ENCODE measurements at regions of chr6 and their contacts with region 1.

Region 1: GRCh38 chr6:55276745-55277530 is 50.3 kb upstream of the GFRAL start:
- DNase-seq: peak; percentile 39
- H3K4me3 ChIP-seq: no peak overlapping the region
- H3K27ac ChIP-seq: no peak overlapping the region
- H3K4me1 ChIP-seq: no peaks in the 10 kb centered on the region
- H3K27me3 ChIP-seq: peaks cover 1% of the 10 kb centered on the region
- CTCF ChIP-seq: peak; percentile 56 to 71

Region 2: DNA sequence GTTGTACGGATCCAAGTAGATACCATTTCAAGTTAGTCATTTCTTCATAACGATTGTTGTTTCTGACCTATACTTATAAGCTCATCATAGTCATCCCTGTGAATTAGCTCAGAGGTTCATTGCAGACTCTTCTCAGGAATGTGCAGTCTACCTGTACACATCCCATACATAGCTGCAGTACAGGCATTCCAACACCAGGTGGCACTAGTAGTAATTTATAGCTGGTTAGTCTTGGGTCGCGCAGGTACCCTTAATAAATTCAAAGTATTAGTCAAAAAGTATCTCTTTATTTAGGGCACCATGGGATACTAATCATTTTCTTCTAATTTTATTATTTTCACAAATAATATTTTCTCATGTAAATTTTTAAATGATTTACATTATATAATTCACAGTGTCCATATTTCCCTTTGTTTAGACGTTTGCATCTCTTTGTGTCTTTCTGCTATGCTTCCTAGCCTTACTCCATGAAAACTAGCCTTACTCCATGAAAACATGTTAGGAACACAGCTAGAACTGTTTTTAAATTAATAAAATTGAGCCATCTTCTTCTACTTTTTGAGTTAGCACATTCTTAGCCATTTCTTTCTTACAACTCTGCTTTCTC is 559.0 kb before region 1 on chr6:
- CTCF ChIA-PET with region 1: no interaction called
- dilution Hi-C with region 1: no loop called
- in situ Hi-C with region 1: no loop called
- intact Hi-C with region 1: no loop called
- DNase-seq: peak; percentile 81
- H3K4me3 ChIP-seq: peak overlapping the region in 2 of 3 experiments; percentile 37 to 43
- H3K27ac ChIP-seq: peak overlapping the region; percentile 91
- H3K4me1 ChIP-seq: peaks cover 22% of the 10 kb centered on the region
- H3K27me3 ChIP-seq: no peaks in the 10 kb centered on the region
- CTCF ChIP-seq: peak; percentile 82 to 85

Region 3: DNA sequence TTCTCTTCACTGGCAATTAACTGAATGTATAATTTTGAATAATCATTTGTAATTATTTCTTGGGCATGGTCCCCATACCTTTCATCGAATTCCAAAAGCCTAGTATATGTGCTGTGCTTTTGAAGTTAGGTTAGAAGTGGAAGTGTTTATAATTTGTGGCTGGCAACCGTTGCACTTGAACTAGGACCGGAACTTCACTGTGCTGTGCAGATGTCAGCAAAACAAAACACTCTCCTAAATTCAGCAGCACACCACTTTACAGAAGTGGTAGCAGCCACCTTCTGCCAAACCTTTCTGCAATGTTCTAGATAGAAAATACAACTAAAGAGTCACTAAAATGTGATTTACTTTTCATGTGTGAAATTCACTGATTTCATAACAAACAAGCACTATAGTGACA is 318.5 kb before region 1 on chr6:
- CTCF ChIA-PET with region 1: no interaction called
- dilution Hi-C with region 1: no loop called
- in situ Hi-C with region 1: no loop called
- intact Hi-C with region 1: no loop called
- DNase-seq: no peak
- H3K4me3 ChIP-seq: no peak overlapping the region
- H3K27ac ChIP-seq: no peak overlapping the region
- H3K4me1 ChIP-seq: no peaks in the 10 kb centered on the region
- H3K27me3 ChIP-seq: no peaks in the 10 kb centered on the region
- CTCF ChIP-seq: no peak

Region 4: DNA sequence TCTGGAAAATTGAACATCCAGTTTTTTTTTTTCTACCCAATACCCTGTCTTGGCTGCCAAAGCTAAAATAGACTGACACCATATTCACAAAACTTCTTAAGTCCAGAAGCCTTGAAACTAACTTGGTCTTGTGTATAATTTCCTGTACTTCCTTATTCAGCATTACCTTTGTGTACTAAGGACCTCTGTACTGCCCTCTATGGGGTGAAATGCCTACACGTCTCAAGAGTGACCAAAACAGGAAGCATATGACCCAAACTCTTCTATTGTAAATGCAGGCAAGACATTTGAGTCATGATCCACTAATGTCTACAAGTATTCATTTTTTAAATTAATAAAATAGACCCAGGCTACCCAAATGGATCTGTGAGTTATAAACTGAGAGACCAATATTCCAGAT is 251.7 kb after region 1 on chr6:
- CTCF ChIA-PET with region 1: no interaction called
- dilution Hi-C with region 1: no loop called
- in situ Hi-C with region 1: no loop called
- intact Hi-C with region 1: loop called (anchors 2 kb)
- DNase-seq: peak; percentile 44
- H3K4me3 ChIP-seq: no peak overlapping the region
- H3K27ac ChIP-seq: no peak overlapping the region
- H3K4me1 ChIP-seq: no peaks in the 10 kb centered on the region
- H3K27me3 ChIP-seq: no peaks in the 10 kb centered on the region
- CTCF ChIP-seq: peak; percentile 56 to 67

Region 5: DNA sequence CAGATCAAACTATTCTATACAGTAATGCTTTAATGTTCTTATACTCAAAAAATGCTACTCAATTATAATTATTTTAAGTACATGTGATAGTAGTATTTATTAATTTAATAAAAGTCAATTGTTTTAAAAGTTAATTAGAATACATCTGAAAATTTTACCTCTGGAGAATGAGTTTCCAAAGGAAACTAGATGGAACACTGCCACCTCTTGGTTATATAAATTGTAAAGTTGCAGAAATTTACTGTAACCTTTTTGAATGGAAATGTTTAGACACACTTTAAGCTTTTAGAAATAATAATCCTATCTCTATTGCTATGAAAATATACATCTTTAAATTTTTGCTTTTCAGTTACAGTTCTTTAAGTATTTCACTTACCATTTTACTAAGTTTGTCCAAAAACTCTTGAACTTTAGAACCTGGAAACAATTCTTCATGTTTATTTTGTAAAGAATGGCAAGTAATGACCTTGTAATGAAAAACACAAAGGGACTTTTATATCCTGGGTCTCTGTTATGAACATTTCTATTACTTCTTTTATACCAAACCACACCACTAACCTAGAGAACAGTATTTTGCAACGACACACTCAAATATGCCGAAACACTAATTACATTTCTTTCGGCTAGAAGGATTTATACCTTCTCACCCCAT is 609.4 kb after region 1 on chr6:
- CTCF ChIA-PET with region 1: interaction called, 6 read pairs
- dilution Hi-C with region 1: no loop called
- in situ Hi-C with region 1: no loop called
- intact Hi-C with region 1: loop called (anchors 10 kb)
- DNase-seq: no peak
- H3K4me3 ChIP-seq: no peak overlapping the region
- H3K27ac ChIP-seq: no peak overlapping the region
- H3K4me1 ChIP-seq: peaks cover 8% of the 10 kb centered on the region
- H3K27me3 ChIP-seq: no peaks in the 10 kb centered on the region
- CTCF ChIP-seq: peak; percentile 27 to 42

Region 6: DNA sequence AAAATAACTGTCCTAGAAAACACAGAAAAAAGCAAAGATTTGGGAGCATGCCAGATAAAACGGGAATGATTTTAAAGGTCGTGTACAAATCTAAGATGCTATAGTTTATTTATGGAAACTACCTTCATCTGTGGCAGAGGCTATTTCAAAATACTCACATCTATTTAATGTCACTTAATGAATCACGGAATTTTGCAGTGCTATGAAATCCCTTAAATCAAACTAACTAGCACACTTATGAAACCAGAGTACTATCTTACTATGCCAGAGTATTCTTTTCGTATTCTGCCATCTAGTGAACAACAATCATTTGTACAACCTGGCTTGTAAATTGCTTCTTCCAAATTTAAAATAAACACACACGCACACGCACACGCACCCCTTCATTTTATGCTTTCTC is 676.4 kb after region 1 on chr6:
- CTCF ChIA-PET with region 1: interaction called, 5 read pairs
- dilution Hi-C with region 1: no loop called
- in situ Hi-C with region 1: loop called (anchors 25 kb)
- intact Hi-C with region 1: loop called (anchors 5 kb)
- DNase-seq: peak; percentile 36
- H3K4me3 ChIP-seq: peak overlapping the region in 2 of 3 experiments; percentile 1 to 2
- H3K27ac ChIP-seq: no peak overlapping the region
- H3K4me1 ChIP-seq: no peaks in the 10 kb centered on the region
- H3K27me3 ChIP-seq: no peaks in the 10 kb centered on the region
- CTCF ChIP-seq: peak; percentile 43 to 56

Region 7: GRCh38 chr6:56279346-56280080 is 1002.6 kb after region 1 on chr6:
- CTCF ChIA-PET with region 1: no interaction called
- dilution Hi-C with region 1: no loop called
- in situ Hi-C with region 1: loop called in 1 of 2 experiments (anchors 25 kb)
- intact Hi-C with region 1: loop called (anchors 10 kb)
- DNase-seq: peak; percentile 17
- H3K4me3 ChIP-seq: no peak overlapping the region
- H3K27ac ChIP-seq: no peak overlapping the region
- H3K4me1 ChIP-seq: no peaks in the 10 kb centered on the region
- H3K27me3 ChIP-seq: no peaks in the 10 kb centered on the region
- CTCF ChIP-seq: no peak

Region 8: DNA sequence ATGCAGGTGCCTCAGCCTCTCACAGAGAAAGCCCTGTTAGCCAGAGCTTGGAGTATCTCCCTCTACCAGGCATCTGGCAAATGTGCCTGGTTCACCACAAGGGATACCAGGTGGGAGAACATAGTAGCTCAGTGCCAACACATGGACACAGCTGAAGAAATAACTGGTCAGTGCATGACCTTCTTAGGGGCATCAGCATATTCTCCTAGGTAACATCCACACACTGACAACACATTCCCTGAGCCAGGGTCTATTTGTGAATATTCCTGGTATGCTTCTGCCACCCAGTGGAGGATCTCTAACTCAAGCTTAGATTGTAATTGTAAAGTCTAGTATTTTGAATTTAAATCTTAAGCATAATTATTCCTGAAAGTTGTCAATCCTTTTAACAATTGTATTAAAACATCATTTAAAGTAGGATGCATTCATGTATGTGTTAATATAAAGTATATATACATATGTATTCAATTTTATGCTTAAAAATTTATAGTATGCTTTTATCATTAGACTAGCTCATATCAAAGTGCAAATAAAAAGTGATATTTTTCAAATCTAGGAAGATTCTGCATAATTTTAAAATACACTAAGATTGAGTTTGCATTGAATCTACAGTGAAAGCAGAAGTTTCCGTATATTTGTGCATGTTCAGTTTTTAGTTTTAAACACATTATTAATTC is 1015.7 kb after region 1 on chr6:
- CTCF ChIA-PET with region 1: no interaction called
- dilution Hi-C with region 1: no loop called
- in situ Hi-C with region 1: loop called in 1 of 2 experiments (anchors 25 kb)
- intact Hi-C with region 1: loop called (anchors 10 kb)
- DNase-seq: peak; percentile 41
- H3K4me3 ChIP-seq: no peak overlapping the region
- H3K27ac ChIP-seq: no peak overlapping the region
- H3K4me1 ChIP-seq: peaks cover 5% of the 10 kb centered on the region
- H3K27me3 ChIP-seq: no peaks in the 10 kb centered on the region
- CTCF ChIP-seq: peak; percentile 51 to 69